IMR-90 (cell line): ENCODE measurements at regions of chr9 and their contacts with region 1.

Region 1: GRCh38 chr9:93453047-93453914 is at the start of gene FAM120AOS:
- DNase-seq: peak; percentile 95
- ATAC-seq: peak; percentile 69
- H3K4me3 ChIP-seq: peak within 1 kb of the TSS; percentile 79
- H3K27ac ChIP-seq: peak within 1 kb of the TSS; percentile 98
- H3K4me1 ChIP-seq: no peaks in the 10 kb centered on the region; the same call in 1 of the 2 replicates
- H3K27me3 ChIP-seq: no peaks in the 10 kb centered on the region
- CTCF ChIP-seq: no peak
- POLR2A ChIP-seq: no peak
- RAD21 ChIP-seq: no peak
- total RNA-seq, gene FAM120AOS: 22.2 and 24.7 TPM in 2 replicates

Region 2: DNA sequence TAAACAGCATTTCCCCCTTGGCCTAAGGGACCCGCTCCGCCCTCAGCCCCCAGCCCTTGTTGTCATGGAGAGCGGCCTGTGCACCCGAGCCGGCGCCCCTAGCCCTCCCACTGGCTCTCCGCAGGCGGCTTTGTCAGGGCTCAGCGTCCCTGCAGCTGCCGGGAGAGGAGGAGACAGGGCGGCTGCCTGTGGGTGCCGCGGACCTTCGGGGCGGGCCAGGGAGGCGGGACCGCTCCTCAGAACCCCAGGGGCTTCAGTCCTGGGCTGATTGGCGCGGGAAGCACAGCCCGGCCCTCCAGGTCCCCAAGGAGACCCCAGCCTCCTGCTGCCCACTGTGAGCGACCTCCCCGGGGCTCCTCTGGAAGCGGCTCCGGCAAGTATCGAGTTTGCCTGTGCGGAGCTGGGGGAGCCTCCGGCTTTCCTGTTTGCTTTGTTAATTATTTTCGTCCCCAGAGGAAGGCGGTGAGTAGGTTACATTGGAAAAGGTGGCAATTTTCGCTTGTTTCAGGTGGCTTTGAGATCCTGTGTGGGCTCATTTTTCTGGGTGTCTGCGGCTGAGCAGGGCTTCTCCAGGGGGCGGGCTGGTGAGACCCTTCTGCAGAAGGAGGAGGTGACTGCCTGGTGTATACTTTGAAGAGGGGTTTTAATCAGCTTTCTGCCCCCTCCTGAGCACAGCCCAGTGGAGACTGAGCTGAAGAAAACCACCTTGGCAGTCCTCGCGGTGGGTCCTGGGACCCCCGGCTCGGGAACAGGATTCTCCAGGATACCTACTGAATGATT is 505.8 kb before region 1 on chr9 and contains the start of gene FGD3:
- CTCF ChIA-PET with region 1: no interaction called
- POLR2A ChIA-PET with region 1: no interaction called
- dilution Hi-C with region 1: no loop called
- in situ Hi-C with region 1: no loop called
- intact Hi-C with region 1: no loop called
- DNase-seq: no peak
- ATAC-seq: peak; percentile 87
- H3K4me3 ChIP-seq: no peak within 1 kb of the TSS; the same call in 1 of the 2 replicates
- H3K27ac ChIP-seq: no peak within 1 kb of the TSS
- H3K4me1 ChIP-seq: no peaks in the 10 kb centered on the region
- H3K27me3 ChIP-seq: peaks cover 25% of the 10 kb centered on the region
- CTCF ChIP-seq: no peak
- POLR2A ChIP-seq: no peak
- RAD21 ChIP-seq: no peak
- total RNA-seq, gene FGD3: not detected in 2 replicates

Region 3: DNA sequence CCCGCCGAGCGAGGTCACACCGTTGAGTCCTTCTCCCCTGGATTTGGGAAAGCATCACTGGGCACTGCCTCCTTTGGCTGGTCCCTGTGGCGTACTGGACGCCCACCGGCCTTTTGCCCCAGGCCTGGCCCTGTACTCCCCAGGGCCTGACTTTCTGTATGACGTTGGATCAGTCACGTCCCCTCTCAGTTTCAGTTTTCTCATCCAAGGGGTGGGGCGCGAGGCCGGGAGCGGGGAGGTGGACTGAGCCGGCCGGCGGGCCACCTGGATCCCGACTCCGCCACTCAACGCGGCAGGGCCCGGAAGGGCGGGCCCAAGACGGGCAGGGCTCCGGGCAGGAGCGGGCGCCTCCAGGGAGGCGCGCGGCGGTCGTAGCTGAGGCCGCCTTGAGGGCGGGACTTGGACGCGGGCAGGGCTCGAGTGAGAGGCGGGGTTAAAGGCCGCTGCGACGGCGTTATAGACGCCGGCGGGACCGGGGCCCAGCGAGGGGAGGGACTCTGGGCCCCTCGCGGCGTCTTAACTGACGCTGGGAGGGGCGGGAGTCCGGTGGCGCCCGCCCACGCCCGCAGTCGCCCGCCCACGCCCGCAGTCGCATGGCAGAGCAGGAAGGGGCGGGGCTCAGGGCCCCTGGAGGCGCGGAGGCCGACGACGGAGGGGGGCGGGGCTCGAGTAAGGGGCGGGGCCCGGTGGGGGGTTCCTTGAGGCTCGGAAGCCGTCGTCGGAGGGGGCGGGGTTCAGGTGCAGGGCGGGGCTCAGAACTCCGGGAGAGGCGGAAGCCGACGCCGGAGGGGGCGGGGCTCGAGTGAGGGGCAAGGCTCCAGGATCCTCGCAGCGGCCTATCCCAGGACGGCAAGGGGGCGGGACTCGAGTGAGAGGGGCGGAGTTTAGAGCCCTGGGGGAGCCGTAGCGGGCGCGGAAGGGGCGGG is 357.8 kb before region 1 on chr9:
- CTCF ChIA-PET with region 1: no interaction called
- POLR2A ChIA-PET with region 1: no interaction called
- dilution Hi-C with region 1: no loop called
- in situ Hi-C with region 1: no loop called
- intact Hi-C with region 1: loop called (anchors 10 kb)
- DNase-seq: peak; percentile 98
- ATAC-seq: peak; percentile 85
- H3K4me3 ChIP-seq: peak overlapping the region; percentile 51
- H3K27ac ChIP-seq: peak overlapping the region; percentile 90
- H3K4me1 ChIP-seq: peaks cover 31% of the 10 kb centered on the region
- H3K27me3 ChIP-seq: no peaks in the 10 kb centered on the region
- CTCF ChIP-seq: no peak
- POLR2A ChIP-seq: peak; percentile 83
- RAD21 ChIP-seq: no peak

Region 4: GRCh38 chr9:93119953-93120845 is 333.1 kb before region 1 on chr9:
- CTCF ChIA-PET with region 1: no interaction called
- POLR2A ChIA-PET with region 1: no interaction called
- dilution Hi-C with region 1: no loop called
- in situ Hi-C with region 1: loop called (anchors 10 kb)
- intact Hi-C with region 1: no loop called
- DNase-seq: peak; percentile 94
- ATAC-seq: peak; percentile 87
- H3K4me3 ChIP-seq: no peak overlapping the region
- H3K27ac ChIP-seq: peak overlapping the region; percentile 74
- H3K4me1 ChIP-seq: peaks cover 15% of the 10 kb centered on the region
- H3K27me3 ChIP-seq: no peaks in the 10 kb centered on the region
- CTCF ChIP-seq: peak; percentile 50
- POLR2A ChIP-seq: 0 out of 2 replicates have a peak, but pooled peaks have one; percentile 17
- RAD21 ChIP-seq: peak; percentile 42

Region 5: GRCh38 chr9:93134015-93134739 is 319.1 kb before region 1 on chr9 and contains the start of gene NINJ1:
- CTCF ChIA-PET with region 1: no interaction called
- POLR2A ChIA-PET with region 1: no interaction called
- dilution Hi-C with region 1: no loop called
- in situ Hi-C with region 1: no loop called
- intact Hi-C with region 1: loop called (anchors 10 kb)
- DNase-seq: peak; percentile 60
- ATAC-seq: peak; percentile 89
- H3K4me3 ChIP-seq: peak within 1 kb of the TSS; percentile 82
- H3K27ac ChIP-seq: peak within 1 kb of the TSS; percentile 84
- H3K4me1 ChIP-seq: peaks cover 30% of the 10 kb centered on the region
- H3K27me3 ChIP-seq: no peaks in the 10 kb centered on the region
- CTCF ChIP-seq: no peak
- POLR2A ChIP-seq: peak; percentile 94
- RAD21 ChIP-seq: 0 out of 2 replicates have a peak, but pooled peaks have one; percentile 4
- total RNA-seq, gene NINJ1: 21.9 and 24.7 TPM in 2 replicates

Region 6: GRCh38 chr9:93319992-93320500 is 133.2 kb before region 1 on chr9:
- CTCF ChIA-PET with region 1: no interaction called
- POLR2A ChIA-PET with region 1: no interaction called
- dilution Hi-C with region 1: no loop called
- in situ Hi-C with region 1: no loop called
- intact Hi-C with region 1: no loop called
- DNase-seq: no peak
- ATAC-seq: no peak
- H3K4me3 ChIP-seq: no peak overlapping the region
- H3K27ac ChIP-seq: no peak overlapping the region
- H3K4me1 ChIP-seq: no peaks in the 10 kb centered on the region
- H3K27me3 ChIP-seq: peaks cover 8% of the 10 kb centered on the region
- CTCF ChIP-seq: no peak
- POLR2A ChIP-seq: no peak
- RAD21 ChIP-seq: no peak

Region 7: GRCh38 chr9:93513606-93514005 is 60.3 kb after region 1 on chr9:
- CTCF ChIA-PET with region 1: no interaction called
- POLR2A ChIA-PET with region 1: no interaction called
- dilution Hi-C with region 1: no loop called
- in situ Hi-C with region 1: no loop called
- intact Hi-C with region 1: loop called (anchors 2 kb)
- DNase-seq: no peak
- ATAC-seq: no peak
- H3K4me3 ChIP-seq: no peak overlapping the region
- H3K27ac ChIP-seq: no peak overlapping the region
- H3K4me1 ChIP-seq: peaks cover 16% of the 10 kb centered on the region
- H3K27me3 ChIP-seq: no peaks in the 10 kb centered on the region
- CTCF ChIP-seq: no peak
- POLR2A ChIP-seq: no peak
- RAD21 ChIP-seq: no peak

Region 8: DNA sequence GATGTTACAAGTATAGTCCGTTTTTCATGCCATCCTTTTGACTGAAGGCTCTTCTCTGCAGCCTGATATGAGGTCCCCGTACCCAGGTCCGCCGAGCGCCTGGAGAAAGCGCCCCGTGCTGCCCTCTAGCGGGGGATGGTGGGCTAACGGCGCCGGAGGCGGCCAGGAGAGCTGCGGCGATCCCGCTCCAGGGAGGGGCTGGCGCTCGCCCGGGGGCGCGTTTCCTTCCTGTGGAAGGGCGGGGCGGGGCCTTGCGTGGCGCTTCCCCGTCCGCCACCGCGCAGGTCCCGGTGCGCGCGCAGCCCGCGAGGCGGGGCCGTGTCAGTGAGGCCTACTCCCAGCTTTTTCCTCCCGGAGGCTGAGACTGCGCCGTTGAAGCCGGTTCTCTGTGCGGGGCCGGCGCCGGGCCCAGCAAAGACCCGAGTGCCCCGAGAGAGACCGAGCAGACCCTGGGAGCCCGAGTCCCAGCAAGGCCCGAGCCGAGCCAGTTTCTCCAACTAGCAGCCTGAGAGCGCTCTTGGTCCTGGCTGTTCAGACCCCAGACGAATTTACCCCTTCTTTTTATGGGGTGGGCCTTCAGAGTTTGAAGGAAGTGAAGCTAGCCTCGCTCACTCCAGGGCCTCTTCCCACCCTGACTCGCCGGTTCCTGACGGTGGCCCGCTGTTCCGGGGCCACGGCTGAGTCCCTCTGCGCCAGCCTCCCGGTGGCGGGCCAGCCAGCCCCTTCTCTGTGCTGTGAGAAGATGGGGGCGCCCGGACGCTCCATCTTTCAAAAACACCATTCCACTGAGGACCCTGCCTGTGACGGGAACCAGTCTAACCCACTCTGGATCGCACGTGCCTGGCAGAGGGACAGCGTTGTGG is 113.4 kb after region 1 on chr9:
- CTCF ChIA-PET with region 1: interaction called, 12 read pairs
- POLR2A ChIA-PET with region 1: interaction called, 6 read pairs
- dilution Hi-C with region 1: no loop called
- in situ Hi-C with region 1: loop called (anchors 10 kb)
- intact Hi-C with region 1: loop called (anchors 1 kb)
- DNase-seq: peak; percentile 94
- ATAC-seq: peak; percentile 99
- H3K4me3 ChIP-seq: peak overlapping the region; percentile 51
- H3K27ac ChIP-seq: peak overlapping the region; percentile 85
- H3K4me1 ChIP-seq: peaks cover 7% of the 10 kb centered on the region
- H3K27me3 ChIP-seq: no peaks in the 10 kb centered on the region
- CTCF ChIP-seq: peak; percentile 95
- POLR2A ChIP-seq: peak; percentile 93
- RAD21 ChIP-seq: peak; percentile 61

Region 9: DNA sequence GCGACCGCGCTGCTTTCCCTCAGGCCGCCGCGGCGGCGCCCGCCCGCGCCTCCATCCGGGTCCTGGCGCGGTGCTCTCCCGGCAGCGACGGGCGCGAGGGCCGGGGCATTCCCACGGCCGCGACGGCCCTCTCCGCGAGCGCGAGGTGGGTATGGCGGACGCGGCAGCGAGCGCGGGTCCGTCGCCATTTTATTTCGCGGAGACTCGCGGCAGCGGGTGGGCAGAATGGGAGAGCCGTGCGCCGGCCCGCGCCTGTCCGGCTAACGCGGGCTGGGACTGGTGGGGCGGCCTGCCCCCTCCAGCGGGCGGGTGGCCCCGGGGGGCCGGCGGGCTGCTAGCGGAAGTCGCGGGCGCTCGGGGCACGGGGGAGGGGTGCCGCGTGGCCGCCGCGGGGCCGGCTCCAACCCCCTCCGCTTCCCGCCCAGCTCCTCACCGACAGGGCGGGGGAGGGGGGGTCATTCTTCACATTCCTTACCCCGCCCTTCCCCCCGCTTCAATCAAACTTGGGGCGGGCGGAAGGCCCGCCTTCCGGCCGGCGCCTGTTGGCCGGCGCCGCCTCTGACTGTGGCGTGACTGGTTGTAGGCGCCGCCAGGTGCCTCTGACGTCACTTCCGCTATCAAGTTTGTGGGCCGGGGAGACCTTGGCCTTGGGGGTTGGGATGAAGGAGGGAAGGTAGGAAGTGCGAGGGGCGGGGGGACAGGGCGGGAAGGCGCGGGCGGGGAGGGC is 713.1 kb after region 1 on chr9:
- CTCF ChIA-PET with region 1: no interaction called
- POLR2A ChIA-PET with region 1: no interaction called
- dilution Hi-C with region 1: no loop called
- in situ Hi-C with region 1: loop called (anchors 25 kb)
- intact Hi-C with region 1: no loop called
- DNase-seq: peak; percentile 99
- ATAC-seq: peak; percentile 78
- H3K4me3 ChIP-seq: peak overlapping the region; percentile 93
- H3K27ac ChIP-seq: peak overlapping the region; percentile 98
- H3K4me1 ChIP-seq: no peaks in the 10 kb centered on the region
- H3K27me3 ChIP-seq: no peaks in the 10 kb centered on the region
- CTCF ChIP-seq: 0 out of 2 replicates have a peak, but pooled peaks have one; percentile 24
- POLR2A ChIP-seq: peak; percentile 96
- RAD21 ChIP-seq: no peak